ENCODE measurements at regions of chr5 and their contacts with region 1.

Region 1: GRCh38 chr5:143023411-143024096 is 253.4 kb downstream of the ARHGAP26 start:
- DNase-seq: peak; percentile 68
- ATAC-seq: peak; percentile 76
- H3K4me3 ChIP-seq: no peak overlapping the region
- H3K27ac ChIP-seq: no peak overlapping the region
- H3K4me1 ChIP-seq: peaks cover 25% of the 10 kb centered on the region
- H3K27me3 ChIP-seq: no peaks in the 10 kb centered on the region
- CTCF ChIP-seq: peak; percentile 33
- POLR2A ChIP-seq: no peak
- RAD21 ChIP-seq: peak; percentile 32

Region 2: GRCh38 chr5:142587354-142587965 is 436.1 kb before region 1 on chr5:
- CTCF ChIA-PET with region 1: no interaction called
- POLR2A ChIA-PET with region 1: no interaction called
- dilution Hi-C with region 1: no loop called
- in situ Hi-C with region 1: no loop called
- intact Hi-C with region 1: no loop called
- DNase-seq: peak; percentile 59
- ATAC-seq: peak; percentile 72
- H3K4me3 ChIP-seq: no peak overlapping the region
- H3K27ac ChIP-seq: no peak overlapping the region
- H3K4me1 ChIP-seq: no peaks in the 10 kb centered on the region
- H3K27me3 ChIP-seq: no peaks in the 10 kb centered on the region
- CTCF ChIP-seq: peak; percentile 57
- POLR2A ChIP-seq: no peak
- RAD21 ChIP-seq: peak; percentile 60

Region 3: GRCh38 chr5:143063175-143063970 is 39.8 kb after region 1 on chr5:
- CTCF ChIA-PET with region 1: no interaction called
- POLR2A ChIA-PET with region 1: no interaction called
- dilution Hi-C with region 1: no loop called
- in situ Hi-C with region 1: no loop called
- intact Hi-C with region 1: loop called (anchors 5 kb)
- DNase-seq: peak; percentile 51
- ATAC-seq: no peak
- H3K4me3 ChIP-seq: no peak overlapping the region
- H3K27ac ChIP-seq: peak overlapping the region; percentile 30; the same call in 1 of the 2 replicates
- H3K4me1 ChIP-seq: peaks cover 43% of the 10 kb centered on the region
- H3K27me3 ChIP-seq: no peaks in the 10 kb centered on the region
- CTCF ChIP-seq: no peak
- POLR2A ChIP-seq: no peak
- RAD21 ChIP-seq: no peak

Region 4: DNA sequence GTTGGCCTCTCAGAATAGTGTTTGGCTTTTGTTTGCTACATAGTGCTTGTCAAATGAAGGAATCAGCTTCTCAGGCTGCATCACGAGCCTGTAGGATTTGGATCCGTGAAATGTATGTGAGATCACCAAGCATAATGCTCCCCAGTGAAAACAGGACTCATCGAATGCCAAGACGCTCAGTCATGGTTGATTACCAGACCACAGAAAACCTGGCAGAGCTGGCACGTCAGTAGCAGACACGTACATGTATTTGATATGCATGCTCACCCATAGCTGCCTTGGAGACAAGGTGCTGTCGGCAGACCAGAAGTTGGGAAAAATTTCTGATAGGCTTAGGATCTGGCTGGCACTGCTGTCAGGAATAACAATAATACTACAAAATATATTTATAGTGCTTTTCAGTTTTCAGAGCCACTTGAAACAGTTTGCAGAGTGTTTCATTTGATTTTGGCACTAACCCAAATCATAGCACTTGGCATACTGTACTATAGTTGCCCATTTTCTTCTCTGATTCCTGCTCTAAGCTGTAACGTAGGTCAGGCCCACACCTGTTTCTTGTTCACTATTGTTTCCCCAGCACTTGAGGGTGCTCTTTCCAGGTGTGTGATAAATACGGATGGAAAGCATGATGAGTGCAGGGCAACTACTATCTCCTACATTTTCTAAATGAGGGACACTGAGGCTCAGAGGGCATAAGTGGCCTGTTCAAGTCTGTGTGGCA is 153.9 kb after region 1 on chr5:
- CTCF ChIA-PET with region 1: no interaction called
- POLR2A ChIA-PET with region 1: no interaction called
- dilution Hi-C with region 1: no loop called
- in situ Hi-C with region 1: no loop called
- intact Hi-C with region 1: loop called (anchors 10 kb)
- DNase-seq: peak; percentile 99
- ATAC-seq: peak; percentile 89
- H3K4me3 ChIP-seq: no peak overlapping the region
- H3K27ac ChIP-seq: no peak overlapping the region
- H3K4me1 ChIP-seq: peaks cover 6% of the 10 kb centered on the region; the same call in 1 of the 2 replicates
- H3K27me3 ChIP-seq: no peaks in the 10 kb centered on the region
- CTCF ChIP-seq: no peak
- POLR2A ChIP-seq: no peak; the same call in 1 of the 2 replicates
- RAD21 ChIP-seq: peak; percentile 36

Region 5: DNA sequence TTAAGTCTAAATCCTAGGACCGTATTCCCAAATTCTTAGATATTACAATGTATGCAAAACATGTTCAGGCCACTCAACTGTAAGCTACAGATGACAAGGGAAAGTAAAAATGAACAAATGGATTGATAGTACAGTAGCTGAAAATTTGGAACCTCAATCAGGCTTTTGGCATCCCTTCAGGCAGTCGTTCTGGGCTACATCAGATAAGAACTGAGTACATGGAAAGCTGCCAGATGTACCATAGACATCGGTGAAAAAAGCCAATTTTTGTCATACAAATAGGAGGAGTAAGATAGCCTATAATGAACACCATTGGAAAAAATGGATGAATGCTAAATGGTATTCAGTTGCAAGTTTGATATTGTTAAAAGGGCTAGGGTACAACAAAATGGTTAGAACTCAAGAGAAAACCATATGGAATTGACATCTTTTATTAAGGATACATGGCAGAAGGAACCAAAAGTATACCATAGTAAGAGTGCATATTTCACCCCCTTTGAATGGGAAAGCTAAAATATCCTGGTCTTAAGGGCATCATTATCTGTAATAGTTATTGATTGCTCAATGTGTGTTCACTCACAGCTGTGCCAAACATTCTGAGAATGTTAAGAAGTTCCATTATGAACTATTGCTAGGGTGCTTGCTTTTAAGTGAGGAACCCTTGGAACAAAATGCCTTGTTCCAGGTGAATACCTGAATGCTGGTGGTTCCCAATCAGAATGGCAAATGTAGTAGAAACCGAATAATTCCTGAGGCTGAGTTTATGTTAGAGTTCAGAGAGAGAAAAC is 293.5 kb after region 1 on chr5:
- CTCF ChIA-PET with region 1: no interaction called
- POLR2A ChIA-PET with region 1: no interaction called
- dilution Hi-C with region 1: no loop called
- in situ Hi-C with region 1: no loop called
- intact Hi-C with region 1: no loop called
- DNase-seq: no peak
- ATAC-seq: no peak
- H3K4me3 ChIP-seq: no peak overlapping the region
- H3K27ac ChIP-seq: no peak overlapping the region
- H3K4me1 ChIP-seq: peaks cover 19% of the 10 kb centered on the region
- H3K27me3 ChIP-seq: no peaks in the 10 kb centered on the region
- CTCF ChIP-seq: no peak
- POLR2A ChIP-seq: no peak
- RAD21 ChIP-seq: no peak